Activated naive CD4-positive, alpha-beta T cell treated with anti-CD3 and anti-CD28 coated beads for 36 hours (primary cell): ENCODE measurements at regions of chr6 and their contacts with region 1.

Region 1: DNA sequence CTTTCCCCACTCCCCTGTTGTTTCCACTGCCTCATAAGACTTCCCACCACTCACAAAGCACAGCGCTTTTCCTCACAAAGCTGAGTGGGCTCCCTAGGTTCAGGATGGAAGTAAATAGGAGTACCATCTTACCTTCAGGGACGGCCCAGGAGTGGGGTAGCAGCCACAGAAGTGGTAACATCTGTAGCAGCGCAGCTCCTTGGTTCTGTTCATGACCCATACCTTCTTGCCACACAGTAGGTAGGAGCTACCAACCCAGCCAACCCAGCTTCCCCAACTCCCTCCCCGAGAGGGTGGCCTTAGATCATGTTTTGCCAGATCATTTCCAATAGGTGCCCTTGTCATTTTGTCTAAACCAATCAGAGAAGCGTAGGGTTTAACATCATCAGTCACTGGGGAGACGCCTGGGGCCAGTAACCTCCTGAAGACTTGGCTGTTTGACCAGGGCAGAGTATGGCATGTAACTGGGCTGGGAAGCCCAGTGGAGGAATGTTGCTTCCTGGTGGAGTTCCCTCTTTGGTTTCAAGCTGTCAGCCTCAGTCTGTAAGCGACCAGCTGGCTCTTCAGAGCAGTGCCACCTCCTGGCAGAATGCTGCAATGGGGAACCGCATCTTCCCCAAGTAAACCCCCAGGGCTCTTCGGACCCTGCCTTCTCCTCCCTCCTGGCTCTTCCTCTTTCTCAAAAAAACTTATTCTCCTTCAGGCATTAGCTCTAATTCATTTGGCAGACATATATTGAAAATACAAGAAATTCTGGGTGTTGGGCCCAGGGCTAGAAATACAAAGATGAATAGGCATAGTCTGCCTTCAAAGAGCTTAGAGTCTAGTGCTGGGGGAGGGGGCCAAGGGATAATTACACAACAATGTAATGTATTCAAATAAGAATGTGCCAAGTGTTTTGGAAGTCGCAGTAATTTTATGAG is at the start of gene HLA-DMA:
- DNase-seq: peak; percentile 87
- H3K4me3 Mint-ChIP-seq: peak within 1 kb of the TSS; percentile 73
- H3K27ac Mint-ChIP-seq: peak within 1 kb of the TSS; percentile 60
- H3K4me1 Mint-ChIP-seq: peaks cover 47% of the 10 kb centered on the region
- H3K27me3 Mint-ChIP-seq: no peaks in the 10 kb centered on the region
- total RNA-seq, gene HLA-DMA: 12.7 to 14.5 TPM

Region 2: GRCh38 chr6:32838114-32838958 is 114.7 kb before region 1 on chr6 and contains the start of gene TAP2:
- CTCF ChIA-PET with region 1: interaction called, 10 read pairs
- intact Hi-C with region 1: no loop called
- DNase-seq: peak; percentile 98
- H3K4me3 Mint-ChIP-seq: peak within 1 kb of the TSS; percentile 89
- H3K27ac Mint-ChIP-seq: peak within 1 kb of the TSS; percentile 99
- H3K4me1 Mint-ChIP-seq: peaks cover 81% of the 10 kb centered on the region
- H3K27me3 Mint-ChIP-seq: no peaks in the 10 kb centered on the region
- total RNA-seq, gene TAP2: 136 to 138 TPM

Region 3: DNA sequence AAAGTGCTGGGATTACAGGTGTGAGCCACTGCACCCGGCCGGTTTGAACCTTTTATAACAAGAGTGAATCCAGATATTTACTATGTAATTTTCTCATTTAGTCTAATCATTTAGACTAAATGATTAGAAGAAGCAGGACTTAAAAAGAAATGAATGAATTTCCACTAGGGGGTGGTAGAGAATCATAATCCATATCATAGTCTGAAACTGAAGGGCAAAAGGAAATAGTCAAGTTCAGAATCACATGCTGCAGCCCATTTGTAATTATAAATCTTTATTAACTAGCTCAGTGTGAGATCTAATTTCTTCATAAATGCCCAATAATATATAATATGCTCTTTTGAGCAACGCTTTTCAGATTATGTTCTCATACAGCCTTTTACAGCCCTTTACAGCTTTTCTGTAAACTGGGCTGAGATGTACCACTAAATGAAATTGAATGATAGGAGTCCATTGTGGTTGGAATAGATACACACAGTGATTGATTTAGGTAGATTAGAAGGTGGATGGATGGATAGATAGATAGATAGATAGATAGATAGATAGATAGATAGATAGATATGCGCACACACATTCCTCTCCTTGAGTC is 67.3 kb before region 1 on chr6:
- CTCF ChIA-PET with region 1: interaction called, 25 read pairs
- intact Hi-C with region 1: loop called (anchors 1 kb)
- DNase-seq: no peak
- H3K4me3 Mint-ChIP-seq: no peak overlapping the region
- H3K27ac Mint-ChIP-seq: no peak overlapping the region
- H3K4me1 Mint-ChIP-seq: peaks cover 9% of the 10 kb centered on the region
- H3K27me3 Mint-ChIP-seq: no peaks in the 10 kb centered on the region

Region 4: GRCh38 chr6:32894080-32895005 is 58.7 kb before region 1 on chr6:
- CTCF ChIA-PET with region 1: interaction called, 37 read pairs
- intact Hi-C with region 1: loop called (anchors 1 kb)
- DNase-seq: peak; percentile 97
- H3K4me3 Mint-ChIP-seq: peak overlapping the region; percentile 97
- H3K27ac Mint-ChIP-seq: peak overlapping the region; percentile 96
- H3K4me1 Mint-ChIP-seq: peaks cover 37% of the 10 kb centered on the region
- H3K27me3 Mint-ChIP-seq: no peaks in the 10 kb centered on the region

Region 5: DNA sequence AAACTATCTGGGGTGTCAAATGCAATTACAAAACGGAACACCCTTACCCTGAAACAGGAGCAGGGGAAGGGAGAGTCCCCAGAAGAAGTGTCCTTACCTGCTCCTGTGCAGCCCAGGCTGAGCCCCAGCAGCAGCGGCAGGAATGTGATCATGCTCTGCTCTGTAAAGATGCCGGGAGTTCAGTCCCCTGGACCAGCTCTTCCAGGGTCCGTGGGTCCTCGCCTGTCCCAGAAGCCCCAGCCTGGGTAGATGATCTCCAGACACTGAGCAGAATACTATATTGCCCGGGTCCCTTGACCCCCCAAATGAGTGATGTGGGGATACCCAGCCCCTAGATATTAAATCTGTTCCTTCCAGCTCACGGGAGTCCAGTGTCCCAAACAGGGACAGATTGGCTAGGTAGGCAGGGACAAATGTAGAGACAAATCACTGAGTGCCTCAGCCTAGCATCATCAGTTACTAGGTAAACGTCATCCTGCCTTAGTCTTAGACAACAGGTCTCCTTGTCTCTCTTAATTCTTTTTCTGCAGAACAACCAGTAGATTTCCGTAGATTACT is 12.3 kb before region 1 on chr6 and contains the start of gene HLA-DMB:
- CTCF ChIA-PET with region 1: interaction called, 148 read pairs
- intact Hi-C with region 1: loop called (anchors 1 kb)
- DNase-seq: peak; percentile 65
- H3K4me3 Mint-ChIP-seq: peak within 1 kb of the TSS; percentile 79
- H3K27ac Mint-ChIP-seq: peak within 1 kb of the TSS; percentile 78
- H3K4me1 Mint-ChIP-seq: peaks cover 57% of the 10 kb centered on the region
- H3K27me3 Mint-ChIP-seq: no peaks in the 10 kb centered on the region
- total RNA-seq, gene HLA-DMB: 0.76 to 1.3 TPM

Region 6: GRCh38 chr6:32964776-32965175 is 11.7 kb after region 1 on chr6:
- CTCF ChIA-PET with region 1: interaction called, 167 read pairs
- intact Hi-C with region 1: loop called (anchors 1 kb)
- DNase-seq: no peak
- H3K4me3 Mint-ChIP-seq: no peak overlapping the region
- H3K27ac Mint-ChIP-seq: no peak overlapping the region
- H3K4me1 Mint-ChIP-seq: peaks cover 48% of the 10 kb centered on the region
- H3K27me3 Mint-ChIP-seq: no peaks in the 10 kb centered on the region

Region 7: DNA sequence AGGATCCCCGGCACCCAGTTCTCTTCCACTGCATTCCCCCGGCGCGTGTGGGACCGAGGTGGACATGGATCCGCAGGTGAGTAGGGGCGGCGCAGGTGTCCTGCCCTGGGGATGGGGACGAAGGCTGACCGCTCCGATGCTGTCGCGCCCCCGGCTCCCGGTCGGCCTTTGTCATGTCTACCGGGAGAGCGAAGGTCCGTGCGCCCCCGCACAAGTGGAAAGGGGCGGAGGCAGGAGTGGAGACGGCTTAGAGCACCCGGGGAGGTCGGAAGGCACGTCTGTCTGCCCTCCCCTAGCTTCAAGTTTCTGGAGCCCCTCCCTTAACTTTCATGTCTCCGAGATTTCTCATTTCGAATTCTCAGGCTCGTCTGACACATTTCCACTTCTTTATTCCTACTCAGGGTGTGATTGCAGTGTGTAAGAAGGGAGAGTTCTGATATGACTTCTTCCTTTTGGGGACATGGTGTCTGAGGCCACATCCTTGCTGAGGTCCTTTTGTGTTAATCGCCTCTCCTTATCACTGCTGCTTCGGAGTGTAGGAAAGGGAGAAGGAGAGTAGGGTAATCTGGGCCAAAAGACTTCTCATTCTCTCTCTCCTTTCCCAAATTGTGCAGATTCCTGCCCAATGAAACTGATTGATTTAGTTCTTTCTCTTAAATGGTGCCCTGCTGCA is 439.0 kb after region 1 on chr6:
- CTCF ChIA-PET with region 1: no interaction called
- intact Hi-C with region 1: no loop called
- DNase-seq: peak; percentile 72
- H3K4me3 Mint-ChIP-seq: peak overlapping the region; percentile 82
- H3K27ac Mint-ChIP-seq: peak overlapping the region; percentile 97
- H3K4me1 Mint-ChIP-seq: peaks cover 41% of the 10 kb centered on the region
- H3K27me3 Mint-ChIP-seq: no peaks in the 10 kb centered on the region